Activated T-helper 1 cell treated with anti-CD3 and anti-CD28 coated beads, Interleukin-12 subunit alpha, Interleukin-12 subunit beta, Interleukin-2, Interleukin-4 antibody, amounts not matched to agents 30 ng/mL and 10 ng/mL and 1 ng/mL, durations not matched to agents 14 hours and 24 hours and 36 hours (primary cell): ENCODE measurements at regions of chr12 and their contacts with region 1.

Region 1: GRCh38 chr12:51970904-51971646 is 19.6 kb downstream of the ACVR1B start:
- DNase-seq: peak; percentile 56
- H3K4me3 Mint-ChIP-seq: peak overlapping the region; percentile 52
- H3K27ac Mint-ChIP-seq: peak overlapping the region; percentile 69
- H3K4me1 Mint-ChIP-seq: peaks cover 64% of the 10 kb centered on the region
- H3K27me3 Mint-ChIP-seq: peaks cover 27% of the 10 kb centered on the region

Region 2: GRCh38 chr12:51391283-51392162 is 579.6 kb before region 1 on chr12 and contains the start of gene GALNT6:
- intact Hi-C with region 1: loop called (anchors 10 kb)
- DNase-seq: peak; percentile 64
- H3K4me3 Mint-ChIP-seq: peak within 1 kb of the TSS; percentile 90
- H3K27ac Mint-ChIP-seq: peak within 1 kb of the TSS; percentile 81
- H3K4me1 Mint-ChIP-seq: peaks cover 73% of the 10 kb centered on the region
- H3K27me3 Mint-ChIP-seq: peaks cover 2% of the 10 kb centered on the region
- total RNA-seq, gene GALNT6: 11.9 and 12.4 TPM in 2 replicates

Region 3: DNA sequence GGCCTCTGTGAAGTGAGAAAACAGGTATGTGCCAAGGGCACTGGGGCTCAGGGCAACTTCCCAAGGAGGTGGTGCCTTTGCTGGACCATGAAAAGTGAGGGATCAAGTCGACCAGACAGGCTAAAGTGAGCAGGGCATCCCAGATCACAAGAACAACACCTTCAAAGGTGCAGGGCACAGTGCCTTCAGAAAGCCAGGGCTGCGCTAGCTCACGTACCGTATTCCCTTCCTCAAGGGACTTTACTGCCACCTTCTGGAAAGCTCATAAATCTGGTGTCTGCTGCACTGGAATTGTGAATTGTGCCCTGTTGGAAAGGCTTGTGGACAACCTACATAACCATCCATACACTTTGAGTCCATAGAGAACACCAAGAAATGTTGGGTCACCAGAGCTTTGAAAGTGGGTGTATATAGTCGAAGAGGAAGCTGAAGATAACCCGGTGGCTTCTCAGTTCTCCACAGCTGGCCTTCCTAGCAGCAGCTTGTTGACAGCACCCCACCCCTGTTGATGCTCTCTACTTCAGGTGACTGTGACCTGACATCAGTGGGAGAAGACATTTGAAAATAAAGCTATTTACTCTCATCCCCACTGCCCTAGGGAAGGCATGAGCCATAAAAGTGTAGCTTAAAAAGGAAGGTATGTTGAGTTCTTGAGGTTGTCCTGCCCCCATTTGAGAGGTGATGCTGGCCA is 147.1 kb before region 1 on chr12:
- intact Hi-C with region 1: loop called (anchors 2 kb)
- DNase-seq: no peak
- H3K4me3 Mint-ChIP-seq: no peak overlapping the region
- H3K27ac Mint-ChIP-seq: no peak overlapping the region
- H3K4me1 Mint-ChIP-seq: peaks cover 22% of the 10 kb centered on the region
- H3K27me3 Mint-ChIP-seq: peaks cover 33% of the 10 kb centered on the region

Region 4: DNA sequence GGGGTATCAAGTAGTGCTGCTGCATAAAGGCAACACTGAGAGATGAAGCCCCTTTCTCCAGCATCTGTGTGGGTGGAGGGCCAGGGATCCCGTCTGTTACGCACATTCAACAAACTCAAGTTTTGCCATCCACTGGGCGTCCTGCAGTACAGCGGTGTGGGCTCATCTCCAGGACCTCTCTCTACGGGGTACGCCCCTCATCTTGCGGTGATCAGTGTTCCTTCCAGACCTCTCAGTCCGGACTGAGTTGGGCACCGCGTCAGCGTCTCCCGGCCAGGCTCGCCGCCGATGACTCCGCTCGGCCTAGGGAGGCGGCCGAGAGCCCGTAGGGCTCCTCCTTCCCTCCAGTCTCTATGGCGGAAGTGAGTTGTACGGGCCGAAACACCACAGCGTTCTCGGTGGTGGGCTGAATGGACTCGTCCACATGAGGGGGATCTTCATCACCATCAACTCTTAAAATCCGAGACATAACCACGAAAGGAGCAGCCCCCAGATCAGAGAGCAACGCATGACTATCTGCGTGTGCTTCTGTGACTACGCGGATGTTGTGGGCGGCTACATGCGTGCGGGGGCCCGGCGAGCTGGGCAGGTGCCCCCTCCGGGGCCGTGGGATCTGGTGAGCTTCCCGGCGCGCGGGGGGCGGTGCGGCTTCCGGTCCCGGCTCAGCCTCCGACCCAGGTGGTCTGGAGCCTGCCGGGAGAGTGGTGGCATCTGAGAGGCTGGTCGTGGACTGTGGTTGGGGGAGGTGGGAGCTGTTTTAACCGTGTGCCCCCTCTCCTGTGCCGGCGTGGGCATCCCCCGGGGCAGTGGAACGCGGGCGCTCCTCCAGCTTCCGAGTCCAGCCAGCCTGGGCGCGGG is 98.5 kb after region 1 on chr12 and contains the start of gene ATG101:
- intact Hi-C with region 1: loop called (anchors 1 kb)
- DNase-seq: peak; percentile 84
- H3K4me3 Mint-ChIP-seq: peak within 1 kb of the TSS; percentile 96
- H3K27ac Mint-ChIP-seq: peak within 1 kb of the TSS; percentile 99
- H3K4me1 Mint-ChIP-seq: peaks cover 54% of the 10 kb centered on the region
- H3K27me3 Mint-ChIP-seq: peaks cover 2% of the 10 kb centered on the region
- total RNA-seq, gene ATG101: 56.2 and 63.3 TPM in 2 replicates